Mammary epithelial cell (primary cell): ENCODE measurements at regions of chr13 and their contacts with region 1.

Region 1: GRCh38 chr13:69721631-69722030 is 386.0 kb upstream of the ATXN8OS start:
- DNase-seq: no peak
- H3K4me3 ChIP-seq: no peak overlapping the region
- H3K27ac ChIP-seq: no peak overlapping the region
- H3K4me1 ChIP-seq: no peaks in the 10 kb centered on the region
- H3K27me3 ChIP-seq: no peaks in the 10 kb centered on the region
- CTCF ChIP-seq: no peak

Region 2: DNA sequence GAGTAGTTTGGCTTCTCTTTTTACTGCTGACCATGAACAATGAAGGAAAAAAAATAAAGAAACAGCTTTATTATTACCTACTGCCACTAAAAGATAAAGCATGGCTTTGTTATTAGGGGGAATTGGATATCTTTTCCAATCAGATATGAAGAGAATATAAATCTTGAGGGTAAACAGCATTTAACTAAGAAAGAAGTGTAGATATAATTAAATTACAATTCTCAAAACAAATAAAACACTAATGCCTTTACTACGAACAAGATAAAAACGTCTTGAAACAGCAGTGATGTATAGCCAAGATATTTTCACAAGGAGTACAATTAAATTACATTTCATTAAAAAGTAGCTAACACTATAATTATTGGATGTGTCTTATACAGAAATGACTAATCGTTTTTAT is 39.9 kb before region 1 on chr13:
- CTCF ChIA-PET with region 1: no interaction called
- dilution Hi-C with region 1: no loop called
- in situ Hi-C with region 1: no loop called
- intact Hi-C with region 1: loop called (anchors 1 kb)
- DNase-seq: no peak
- H3K4me3 ChIP-seq: no peak overlapping the region
- H3K27ac ChIP-seq: no peak overlapping the region
- H3K4me1 ChIP-seq: no peaks in the 10 kb centered on the region
- H3K27me3 ChIP-seq: no peaks in the 10 kb centered on the region
- CTCF ChIP-seq: no peak

Region 3: DNA sequence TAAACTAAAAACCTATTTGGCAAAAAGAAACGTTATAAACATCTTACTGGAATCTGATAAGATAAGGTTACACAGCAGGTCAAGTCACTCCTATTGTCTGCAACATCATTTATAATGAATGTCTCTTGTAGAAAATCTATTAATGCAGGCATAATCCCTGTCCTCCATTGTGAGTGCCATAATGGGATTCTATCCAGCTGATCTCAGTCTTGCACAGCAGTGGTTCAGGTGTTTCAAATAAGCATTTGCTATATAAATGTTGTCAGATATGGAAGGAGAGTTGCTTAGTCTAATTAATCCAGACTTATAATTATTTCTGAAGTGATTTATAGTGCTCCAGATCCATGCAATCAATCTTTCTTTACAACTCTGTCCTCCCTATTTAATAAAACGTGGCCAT is 199.5 kb after region 1 on chr13:
- CTCF ChIA-PET with region 1: no interaction called
- dilution Hi-C with region 1: no loop called
- in situ Hi-C with region 1: no loop called
- intact Hi-C with region 1: no loop called
- DNase-seq: no peak
- H3K4me3 ChIP-seq: no peak overlapping the region
- H3K27ac ChIP-seq: no peak overlapping the region
- H3K4me1 ChIP-seq: no peaks in the 10 kb centered on the region
- H3K27me3 ChIP-seq: no peaks in the 10 kb centered on the region
- CTCF ChIP-seq: no peak